ENCODE measurements at regions of chr10 and their contacts with region 1.

Region 1: DNA sequence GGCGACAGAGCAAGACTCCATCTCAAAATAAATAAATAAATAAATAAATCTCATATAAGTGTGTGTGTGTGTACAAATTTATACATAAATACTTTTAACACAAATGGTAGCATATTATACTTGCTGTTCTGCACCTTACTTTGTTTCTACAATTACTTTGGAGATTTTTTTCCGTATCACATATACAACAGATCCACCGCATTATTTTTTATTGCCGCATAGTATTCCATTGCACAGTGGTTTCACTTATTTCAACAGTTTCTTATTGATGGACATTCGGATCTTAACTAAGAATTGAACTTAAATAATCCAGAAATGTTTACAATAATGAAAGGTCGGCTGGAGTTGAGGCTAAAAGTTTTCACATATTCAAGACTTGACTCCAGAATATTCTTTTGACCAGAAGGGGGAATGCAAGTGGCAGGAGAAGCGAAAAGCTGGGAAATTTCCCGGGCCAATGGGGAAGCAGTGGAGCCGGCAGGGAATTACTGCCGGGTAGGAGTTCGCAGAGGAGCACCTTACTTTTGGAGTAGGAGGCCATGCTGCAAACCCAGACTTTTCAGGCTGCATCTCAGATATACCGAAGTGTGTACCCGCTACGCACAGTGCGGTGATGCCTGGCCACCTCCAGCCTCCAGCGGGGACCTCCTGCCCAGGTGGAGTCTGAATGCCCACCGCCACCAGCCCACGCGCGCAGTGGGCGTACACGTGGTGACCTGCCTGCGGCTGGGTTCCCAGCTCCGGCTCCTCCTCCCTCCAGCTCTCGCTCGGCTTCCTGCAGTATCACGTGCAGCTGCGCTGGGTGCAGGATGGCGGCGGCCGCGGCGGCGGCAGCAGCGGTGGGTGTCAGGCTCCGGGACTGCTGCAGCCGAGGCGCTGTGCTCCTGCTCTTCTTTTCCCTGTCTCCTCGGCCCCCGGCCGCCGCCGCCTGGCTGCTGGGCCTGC is at the start of gene CNNM1:
- DNase-seq: peak; percentile 54
- ATAC-seq: peak; percentile 69
- H3K4me3 ChIP-seq: peak within 1 kb of the TSS; percentile 74
- H3K27ac ChIP-seq: no peak within 1 kb of the TSS
- H3K4me1 ChIP-seq: peaks cover 13% of the 10 kb centered on the region
- H3K27me3 ChIP-seq: no peaks in the 10 kb centered on the region
- CTCF ChIP-seq: peak; percentile 37; the same call in 1 of the 2 replicates
- total RNA-seq, gene CNNM1: 3.3 and 4.3 TPM in 2 replicates

Region 2: GRCh38 chr10:99315853-99316252 is 13.0 kb before region 1 on chr10:
- CTCF ChIA-PET with region 1: no interaction called
- POLR2A ChIA-PET with region 1: no interaction called
- intact Hi-C with region 1: no loop called
- DNase-seq: no peak
- ATAC-seq: no peak
- H3K4me3 ChIP-seq: no peak overlapping the region
- H3K27ac ChIP-seq: no peak overlapping the region
- H3K4me1 ChIP-seq: no peaks in the 10 kb centered on the region
- H3K27me3 ChIP-seq: peaks cover 20% of the 10 kb centered on the region; the same call in 1 of the 2 replicates
- CTCF ChIP-seq: no peak

Region 3: DNA sequence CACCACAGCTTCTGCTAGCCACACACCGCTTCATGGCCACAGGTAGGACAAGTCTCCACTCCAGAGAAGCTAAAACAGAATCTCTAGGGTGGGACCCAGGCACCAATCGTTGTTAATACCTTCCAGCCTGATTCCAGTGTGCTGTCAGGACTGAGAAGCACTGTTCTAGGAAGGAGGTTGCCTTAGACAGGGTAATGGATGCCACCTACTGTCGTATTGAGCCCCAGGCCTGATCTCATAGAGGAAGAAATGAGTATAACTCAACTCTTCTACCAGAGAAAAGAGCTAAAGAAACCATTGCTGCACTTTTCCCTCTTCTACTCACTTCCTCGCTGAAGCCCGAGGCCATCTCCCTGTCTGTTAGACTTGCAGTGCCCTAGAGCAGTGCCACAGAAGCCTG is 32.1 kb after region 1 on chr10:
- CTCF ChIA-PET with region 1: no interaction called
- POLR2A ChIA-PET with region 1: no interaction called
- intact Hi-C with region 1: loop called (anchors 2 kb)
- DNase-seq: no peak
- ATAC-seq: peak; percentile 50
- H3K4me3 ChIP-seq: no peak overlapping the region
- H3K27ac ChIP-seq: no peak overlapping the region
- H3K4me1 ChIP-seq: no peaks in the 10 kb centered on the region
- H3K27me3 ChIP-seq: no peaks in the 10 kb centered on the region
- CTCF ChIP-seq: 0 out of 2 replicates have a peak, but pooled peaks have one; percentile 9

Region 4: DNA sequence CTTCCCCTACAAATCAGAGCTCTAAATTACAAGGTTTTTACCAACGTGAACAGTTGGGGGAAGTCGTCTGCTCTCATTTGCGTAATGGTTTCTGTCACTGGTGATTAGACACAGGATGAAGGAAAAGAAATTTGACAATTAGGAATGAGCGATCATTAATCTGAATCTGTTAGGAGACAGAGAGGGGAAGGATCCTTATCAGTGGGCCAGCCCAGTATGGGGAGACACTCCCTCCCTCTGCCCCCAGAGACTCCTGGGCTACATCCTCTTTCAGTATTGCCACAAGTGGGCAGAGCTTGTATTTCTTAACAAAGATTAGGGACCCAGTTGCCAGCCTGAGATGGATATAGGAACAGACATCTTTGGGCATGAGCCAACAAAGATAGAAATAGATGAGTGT is 1222.3 kb after region 1 on chr10:
- CTCF ChIA-PET with region 1: no interaction called
- POLR2A ChIA-PET with region 1: no interaction called
- intact Hi-C with region 1: no loop called
- DNase-seq: no peak
- ATAC-seq: no peak
- H3K4me3 ChIP-seq: no peak overlapping the region
- H3K27ac ChIP-seq: no peak overlapping the region
- H3K4me1 ChIP-seq: no peaks in the 10 kb centered on the region
- H3K27me3 ChIP-seq: no peaks in the 10 kb centered on the region
- CTCF ChIP-seq: no peak

Measured in PC-3 (cell line).